Activated CD8-positive, alpha-beta T cell treated with anti-CD3 and anti-CD28 coated beads for 36 hours (primary cell): ENCODE measurements at regions of chr20 and their contacts with region 1.

Region 1: DNA sequence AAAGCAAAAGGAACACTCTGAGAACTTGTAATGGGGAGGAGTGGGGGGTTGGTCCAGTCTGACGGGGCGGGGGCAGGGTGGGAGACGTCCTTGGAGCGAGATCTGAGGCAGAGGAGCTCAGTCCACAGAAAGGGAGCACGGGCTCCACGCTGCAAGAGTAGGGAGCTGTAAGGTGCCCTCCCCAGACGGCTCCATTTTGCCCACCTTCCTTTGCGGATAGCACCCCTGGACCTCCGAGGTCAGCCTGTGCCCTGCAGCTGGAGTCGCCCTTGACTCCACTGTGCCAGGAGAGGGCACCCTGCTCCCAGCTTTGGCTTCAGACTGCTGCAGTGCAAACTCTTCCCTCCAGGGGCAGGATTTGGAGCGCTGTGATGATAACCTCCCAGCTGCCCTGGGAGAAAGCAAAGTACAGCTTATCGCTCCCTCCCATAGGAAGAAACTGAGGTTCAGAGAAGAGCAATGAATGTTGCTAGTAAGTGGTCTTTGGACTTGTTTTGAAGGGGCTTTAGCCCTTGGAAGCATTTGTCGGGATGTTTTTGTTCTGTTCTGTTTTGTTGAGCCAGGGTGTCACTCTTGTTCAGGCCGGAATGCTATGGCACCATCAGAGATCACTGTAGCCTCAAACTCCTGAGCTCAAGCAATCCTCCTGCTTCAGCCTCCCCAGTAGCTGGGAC is 9.5 kb upstream of the AHCY start:
- DNase-seq: peak; percentile 94
- ATAC-seq: peak; percentile 100
- H3K4me3 Mint-ChIP-seq: no peak overlapping the region
- H3K27ac Mint-ChIP-seq: no peak overlapping the region
- H3K4me1 Mint-ChIP-seq: peaks cover 4% of the 10 kb centered on the region
- H3K27me3 Mint-ChIP-seq: peaks cover 14% of the 10 kb centered on the region
- CTCF ChIP-seq: peak; percentile 100

Region 2: GRCh38 chr20:34165018-34165619 is 147.6 kb before region 1 on chr20:
- CTCF ChIA-PET with region 1: no interaction called
- POLR2A ChIA-PET with region 1: no interaction called
- intact Hi-C with region 1: no loop called
- DNase-seq: no peak
- ATAC-seq: no peak
- H3K4me3 Mint-ChIP-seq: no peak overlapping the region
- H3K27ac Mint-ChIP-seq: no peak overlapping the region
- H3K4me1 Mint-ChIP-seq: peaks cover 3% of the 10 kb centered on the region
- H3K27me3 Mint-ChIP-seq: no peaks in the 10 kb centered on the region
- CTCF ChIP-seq: no peak

Region 3: GRCh38 chr20:34363062-34363464 is 50.4 kb after region 1 on chr20 and contains the start of gene ITCH:
- CTCF ChIA-PET with region 1: interaction called, 33 read pairs
- POLR2A ChIA-PET with region 1: no interaction called
- intact Hi-C with region 1: no loop called
- DNase-seq: peak; percentile 97
- ATAC-seq: peak; percentile 96
- H3K4me3 Mint-ChIP-seq: peak within 1 kb of the TSS; percentile 91
- H3K27ac Mint-ChIP-seq: peak within 1 kb of the TSS; percentile 98
- H3K4me1 Mint-ChIP-seq: peaks cover 38% of the 10 kb centered on the region
- H3K27me3 Mint-ChIP-seq: no peaks in the 10 kb centered on the region
- CTCF ChIP-seq: no peak
- total RNA-seq, gene ITCH: 46.0 to 51.8 TPM

Region 4: GRCh38 chr20:34426026-34426425 is 113.3 kb after region 1 on chr20:
- CTCF ChIA-PET with region 1: interaction called, 23 read pairs
- POLR2A ChIA-PET with region 1: no interaction called
- intact Hi-C with region 1: no loop called
- DNase-seq: no peak
- ATAC-seq: no peak
- H3K4me3 Mint-ChIP-seq: no peak overlapping the region
- H3K27ac Mint-ChIP-seq: peak overlapping the region; percentile 35
- H3K4me1 Mint-ChIP-seq: peaks cover 12% of the 10 kb centered on the region
- H3K27me3 Mint-ChIP-seq: no peaks in the 10 kb centered on the region
- CTCF ChIP-seq: no peak

Region 5: DNA sequence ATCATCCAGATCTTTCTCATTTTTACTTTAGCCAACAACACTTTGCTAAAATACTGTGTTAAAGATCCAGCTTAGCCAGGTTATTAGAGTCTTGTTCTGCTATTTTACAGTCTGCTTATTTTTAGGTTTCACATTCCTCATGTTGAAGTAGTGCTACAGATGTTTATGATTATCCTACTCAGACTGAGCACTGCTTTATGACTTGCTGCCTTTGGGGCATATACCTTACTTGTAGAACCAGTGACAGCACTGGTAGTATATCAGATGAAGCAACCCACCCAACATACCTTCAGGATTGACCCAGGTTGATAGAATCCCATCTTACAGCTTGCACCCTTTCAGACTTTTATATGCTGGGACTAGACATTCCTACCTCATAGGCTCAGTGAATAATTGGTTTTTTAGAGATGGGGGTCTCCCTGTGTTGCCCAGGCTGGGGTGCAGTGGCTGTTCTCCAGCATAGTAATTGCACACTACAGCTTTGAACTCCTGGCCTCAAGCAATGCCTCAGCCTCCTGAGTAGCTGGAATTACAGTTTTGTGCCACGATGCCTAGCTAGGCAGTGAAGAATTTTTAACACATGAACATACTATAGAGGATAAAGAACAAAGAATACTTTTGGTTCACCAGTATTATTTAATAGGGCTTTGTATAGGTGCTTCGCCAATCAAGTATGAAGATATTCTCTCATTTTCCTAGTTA is 139.8 kb after region 1 on chr20:
- CTCF ChIA-PET with region 1: interaction called, 33 read pairs
- POLR2A ChIA-PET with region 1: no interaction called
- intact Hi-C with region 1: no loop called
- DNase-seq: no peak
- ATAC-seq: no peak
- H3K4me3 Mint-ChIP-seq: no peak overlapping the region
- H3K27ac Mint-ChIP-seq: no peak overlapping the region
- H3K4me1 Mint-ChIP-seq: peaks cover 9% of the 10 kb centered on the region
- H3K27me3 Mint-ChIP-seq: no peaks in the 10 kb centered on the region
- CTCF ChIP-seq: no peak

Region 6: DNA sequence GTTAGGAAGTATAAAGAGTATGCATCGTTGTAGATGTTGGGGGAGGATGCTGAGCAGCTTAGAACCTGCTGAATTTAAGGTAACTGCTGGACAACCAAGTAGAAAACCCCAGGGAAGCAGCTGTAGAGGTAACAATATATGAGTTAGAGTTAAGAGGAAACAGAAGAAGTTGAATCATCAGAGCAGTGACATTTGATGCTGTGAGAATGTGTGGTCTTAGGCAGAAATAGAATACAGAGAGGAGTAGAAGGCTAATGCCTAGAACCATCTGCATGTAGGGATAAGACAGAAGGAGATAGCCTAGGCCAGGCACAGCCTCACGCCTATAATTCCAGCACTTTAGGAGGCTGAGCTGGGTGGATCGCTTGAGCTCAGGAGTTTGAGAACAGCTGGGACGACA is 181.0 kb after region 1 on chr20:
- CTCF ChIA-PET with region 1: interaction called, 21 read pairs
- POLR2A ChIA-PET with region 1: no interaction called
- intact Hi-C with region 1: no loop called
- DNase-seq: no peak
- ATAC-seq: no peak
- H3K4me3 Mint-ChIP-seq: no peak overlapping the region
- H3K27ac Mint-ChIP-seq: peak overlapping the region; percentile 41
- H3K4me1 Mint-ChIP-seq: peaks cover 6% of the 10 kb centered on the region
- H3K27me3 Mint-ChIP-seq: no peaks in the 10 kb centered on the region
- CTCF ChIP-seq: no peak

Region 7: DNA sequence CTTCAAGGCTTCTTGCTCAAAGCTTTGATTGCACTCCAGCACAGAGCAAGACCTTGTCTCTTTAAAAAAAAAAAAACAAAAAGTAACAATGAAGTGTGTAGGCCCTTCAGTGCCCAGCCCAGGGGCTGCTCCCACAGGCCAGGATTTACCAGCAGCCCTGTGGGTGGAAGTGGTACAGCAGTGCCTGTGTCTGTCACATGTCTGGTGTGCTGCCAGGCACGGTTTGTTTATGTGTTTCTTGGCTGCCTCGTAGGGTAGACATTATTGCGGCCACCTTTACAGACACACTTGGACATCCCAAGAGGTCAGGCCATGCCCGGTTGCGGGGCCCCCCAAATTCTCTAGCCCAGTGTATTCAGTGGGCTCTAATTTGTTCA is 216.2 kb after region 1 on chr20:
- CTCF ChIA-PET with region 1: interaction called, 100 read pairs
- POLR2A ChIA-PET with region 1: no interaction called
- intact Hi-C with region 1: no loop called
- DNase-seq: no peak
- ATAC-seq: no peak
- H3K4me3 Mint-ChIP-seq: no peak overlapping the region
- H3K27ac Mint-ChIP-seq: no peak overlapping the region
- H3K4me1 Mint-ChIP-seq: peaks cover 6% of the 10 kb centered on the region
- H3K27me3 Mint-ChIP-seq: no peaks in the 10 kb centered on the region
- CTCF ChIP-seq: no peak

Region 8: GRCh38 chr20:34768096-34768495 is 455.4 kb after region 1 on chr20:
- CTCF ChIA-PET with region 1: interaction called, 37 read pairs
- POLR2A ChIA-PET with region 1: no interaction called
- intact Hi-C with region 1: no loop called
- DNase-seq: no peak
- ATAC-seq: no peak
- H3K4me3 Mint-ChIP-seq: no peak overlapping the region
- H3K27ac Mint-ChIP-seq: no peak overlapping the region
- H3K4me1 Mint-ChIP-seq: no peaks in the 10 kb centered on the region
- H3K27me3 Mint-ChIP-seq: no peaks in the 10 kb centered on the region
- CTCF ChIP-seq: no peak